Activated T-helper 1 cell treated with anti-CD3 and anti-CD28 coated beads, Interleukin-12 subunit alpha, Interleukin-12 subunit beta, Interleukin-2, Interleukin-4 antibody, amounts not matched to agents 30 ng/mL and 10 ng/mL and 1 ng/mL, durations not matched to agents 14 hours and 24 hours and 36 hours (primary cell): ENCODE measurements at regions of chr17 and their contacts with region 1.

Region 1: GRCh38 chr17:70168977-70169708 is at the start of gene KCNJ2:
- DNase-seq: peak; percentile 53
- H3K4me3 Mint-ChIP-seq: peak within 1 kb of the TSS; percentile 81
- H3K27ac Mint-ChIP-seq: no peak within 1 kb of the TSS
- H3K4me1 Mint-ChIP-seq: peaks cover 18% of the 10 kb centered on the region
- H3K27me3 Mint-ChIP-seq: peaks cover 49% of the 10 kb centered on the region
- total RNA-seq, gene KCNJ2: 0.05 TPM in 1 of 2 replicates, not detected in the other

Region 2: DNA sequence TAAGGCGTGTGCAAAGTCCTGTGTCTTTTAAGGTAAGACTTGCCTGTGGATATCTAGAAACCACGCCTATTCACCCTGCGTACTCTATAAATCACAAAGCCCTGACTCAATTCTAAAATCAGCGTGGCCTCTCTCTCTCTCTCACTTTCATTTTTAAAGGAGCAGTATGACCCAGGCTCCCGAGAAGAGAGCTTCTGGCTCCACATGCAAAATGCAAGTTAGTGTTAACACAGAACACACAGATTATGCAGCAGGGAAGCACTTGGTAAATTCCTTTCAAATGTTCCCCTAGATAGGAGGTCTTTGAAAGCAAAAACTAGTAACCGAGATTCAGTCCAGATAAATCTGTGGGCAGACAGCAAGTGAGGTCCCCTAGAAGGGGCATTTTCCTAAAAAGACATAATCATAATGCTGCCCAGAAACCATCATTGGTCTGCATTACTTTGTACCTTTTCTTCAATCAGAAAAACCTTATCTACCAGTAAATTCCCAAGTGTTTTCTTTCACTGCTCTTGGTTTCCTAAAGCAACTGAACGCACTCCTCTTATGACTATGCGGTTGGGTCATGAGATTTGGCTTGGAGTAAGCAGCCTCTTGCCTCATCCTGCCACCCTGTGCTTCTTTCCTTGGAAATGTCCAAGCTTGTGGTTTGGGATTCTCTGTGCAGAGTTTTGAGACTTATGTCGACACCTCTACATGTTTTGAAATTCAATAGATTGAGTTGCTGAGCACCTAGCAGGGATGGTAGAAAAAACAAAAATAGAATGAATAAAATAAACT is 31.5 kb before region 1 on chr17:
- intact Hi-C with region 1: loop called (anchors 1 kb)
- DNase-seq: peak; percentile 20
- H3K4me3 Mint-ChIP-seq: no peak overlapping the region
- H3K27ac Mint-ChIP-seq: no peak overlapping the region
- H3K4me1 Mint-ChIP-seq: peaks cover 16% of the 10 kb centered on the region
- H3K27me3 Mint-ChIP-seq: peaks cover 15% of the 10 kb centered on the region

Region 3: GRCh38 chr17:70295731-70296130 is 126.6 kb after region 1 on chr17:
- intact Hi-C with region 1: no loop called
- DNase-seq: no peak
- H3K4me3 Mint-ChIP-seq: no peak overlapping the region
- H3K27ac Mint-ChIP-seq: no peak overlapping the region
- H3K4me1 Mint-ChIP-seq: no peaks in the 10 kb centered on the region
- H3K27me3 Mint-ChIP-seq: no peaks in the 10 kb centered on the region